CD4-positive, alpha-beta T cell (primary cell): ENCODE measurements at regions of chr19 and their contacts with region 1.

Region 1: GRCh38 chr19:13794757-13795589 is at the start of gene ZSWIM4:
- DNase-seq: peak; percentile 66 to 97 (median 90)
- ATAC-seq: peak; percentile 85
- H3K4me3 ChIP-seq: peak within 1 kb of the TSS; percentile 70
- H3K4me3 Mint-ChIP-seq: peak within 1 kb of the TSS; percentile 96
- H3K27ac ChIP-seq: peak within 1 kb of the TSS; percentile 59 to 64
- H3K27ac Mint-ChIP-seq: peak within 1 kb of the TSS; percentile 90
- H3K4me1 ChIP-seq: peaks cover 34% of the 10 kb centered on the region
- H3K4me1 Mint-ChIP-seq: peaks cover 40% of the 10 kb centered on the region
- H3K27me3 ChIP-seq: no peaks in the 10 kb centered on the region
- H3K27me3 Mint-ChIP-seq: no peaks in the 10 kb centered on the region
- CTCF ChIP-seq: no peak
- total RNA-seq, gene ZSWIM4: 3.5 to 3.8 TPM

Region 2: GRCh38 chr19:13846557-13847406 is 51.8 kb after region 1 on chr19:
- CTCF ChIA-PET with region 1: no interaction called
- POLR2A ChIA-PET with region 1: interaction called, 21 read pairs
- intact Hi-C with region 1: loop called in 1 of 2 experiments (anchors 2 kb)
- DNase-seq: peak; percentile 86 to 99 (median 96)
- ATAC-seq: peak; percentile 61
- H3K4me3 ChIP-seq: peak overlapping the region; percentile 76
- H3K4me3 Mint-ChIP-seq: peak overlapping the region; percentile 86
- H3K27ac ChIP-seq: peak overlapping the region; percentile 100
- H3K27ac Mint-ChIP-seq: peak overlapping the region; percentile 99
- H3K4me1 ChIP-seq: peaks cover 86% of the 10 kb centered on the region
- H3K4me1 Mint-ChIP-seq: peaks cover 63% of the 10 kb centered on the region
- H3K27me3 ChIP-seq: no peaks in the 10 kb centered on the region
- H3K27me3 Mint-ChIP-seq: no peaks in the 10 kb centered on the region
- CTCF ChIP-seq: no peak

Region 3: DNA sequence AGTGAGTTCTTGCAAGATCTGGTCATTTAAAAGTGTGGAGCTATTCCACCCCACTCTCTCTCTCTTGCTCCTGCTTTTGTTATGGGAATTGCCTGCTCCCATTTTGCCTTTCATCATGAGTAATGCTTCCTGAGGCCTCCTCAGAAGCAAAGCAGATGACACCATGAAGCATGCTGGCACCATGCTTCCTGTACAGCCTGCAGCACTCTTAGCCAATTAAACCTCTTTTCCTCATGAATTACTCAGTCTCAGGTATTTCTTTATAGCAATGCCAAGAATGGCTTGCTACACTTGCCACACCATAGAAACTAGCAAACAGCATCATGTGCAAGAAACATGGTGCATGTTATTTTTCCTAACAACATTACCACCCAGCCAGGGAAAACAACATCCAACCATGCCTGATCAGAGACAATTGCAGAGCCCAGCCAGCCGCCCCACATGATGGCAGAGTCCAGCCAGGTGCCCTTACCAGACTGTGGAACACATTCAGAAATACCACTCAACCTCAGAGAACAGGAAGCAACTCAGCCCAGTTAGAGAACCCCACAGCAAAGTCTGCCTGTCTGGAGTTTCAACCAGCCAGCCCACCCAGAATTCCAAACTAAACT is 1349.2 kb after region 1 on chr19:
- CTCF ChIA-PET with region 1: no interaction called
- POLR2A ChIA-PET with region 1: no interaction called
- intact Hi-C with region 1: no loop called
- DNase-seq: no peak
- ATAC-seq: no peak
- H3K4me3 ChIP-seq: no peak overlapping the region
- H3K4me3 Mint-ChIP-seq: no peak overlapping the region
- H3K27ac ChIP-seq: no peak overlapping the region
- H3K27ac Mint-ChIP-seq: no peak overlapping the region
- H3K4me1 ChIP-seq: peaks cover 4% of the 10 kb centered on the region
- H3K4me1 Mint-ChIP-seq: peaks cover 21% of the 10 kb centered on the region
- H3K27me3 ChIP-seq: no peaks in the 10 kb centered on the region
- H3K27me3 Mint-ChIP-seq: no peaks in the 10 kb centered on the region
- CTCF ChIP-seq: no peak